GM12878 (cell line): ENCODE measurements at regions of chrX and their contacts with region 1.

Region 1: GRCh38 chrX:148893395-148893794 is 393.0 kb downstream of the AFF2 start:
- DNase-seq: no peak
- ATAC-seq: no peak
- H3K4me3 ChIP-seq: no peak overlapping the region
- H3K27ac ChIP-seq: no peak overlapping the region
- H3K4me1 ChIP-seq: no peaks in the 10 kb centered on the region
- H3K27me3 ChIP-seq: no peaks in the 10 kb centered on the region
- CTCF ChIP-seq: no peak
- EP300 ChIP-seq: no peak
- POLR2A ChIP-seq: no peak
- RAD21 ChIP-seq: no peak

Region 2: GRCh38 chrX:148878351-148878750 is 15.0 kb before region 1 on chrX:
- CTCF ChIA-PET with region 1: interaction called, 4 read pairs
- POLR2A ChIA-PET with region 1: no interaction called
- RAD21 ChIA-PET with region 1: no interaction called
- SMC1A ChIA-PET with region 1: interaction called, 10 read pairs
- in situ Hi-C with region 1: no loop called
- intact Hi-C with region 1: no loop called
- DNase-seq: no peak
- ATAC-seq: no peak
- H3K4me3 ChIP-seq: no peak overlapping the region
- H3K27ac ChIP-seq: no peak overlapping the region
- H3K4me1 ChIP-seq: no peaks in the 10 kb centered on the region
- H3K27me3 ChIP-seq: no peaks in the 10 kb centered on the region
- CTCF ChIP-seq: no peak
- EP300 ChIP-seq: no peak
- POLR2A ChIP-seq: no peak
- RAD21 ChIP-seq: no peak